Naive thymus-derived CD4-positive, alpha-beta T cell (primary cell): ENCODE measurements at regions of chr7 and their contacts with region 1.

Region 1: DNA sequence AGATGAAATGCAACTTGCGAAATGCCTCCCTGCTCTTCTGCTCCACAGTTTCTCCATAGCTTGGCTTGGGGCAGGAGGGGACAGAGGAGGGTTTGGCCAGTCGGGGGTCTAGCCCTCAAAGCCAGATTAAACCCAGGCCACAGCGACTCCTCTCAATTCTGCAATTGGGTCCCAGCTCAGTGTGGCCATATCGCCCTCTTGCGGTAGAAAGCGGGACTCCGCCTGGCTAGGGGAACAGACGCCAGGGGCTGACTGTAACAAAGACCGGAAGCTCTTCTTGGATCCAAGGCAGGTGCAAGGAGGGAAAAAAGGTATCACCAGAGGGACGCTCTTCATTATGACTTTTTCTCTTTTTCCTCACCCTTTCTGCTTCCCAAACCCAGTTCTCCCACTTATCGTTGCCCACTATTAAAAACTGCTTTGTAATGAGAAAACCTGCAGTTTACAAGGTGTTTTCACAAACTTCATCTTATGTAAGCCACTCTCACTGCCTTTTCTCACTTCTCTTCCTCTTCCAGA is 36.6 kb upstream of the TNPO3 start:
- DNase-seq: peak; percentile 69 to 91 (median 79)
- ATAC-seq: peak; percentile 94
- H3K4me3 ChIP-seq: no peak overlapping the region
- H3K4me3 Mint-ChIP-seq: peak overlapping the region in 1 of 10 donors; percentile 49
- H3K27ac ChIP-seq: no peak overlapping the region
- H3K27ac Mint-ChIP-seq: peak overlapping the region in 5 of 9 donors; percentile 34 to 86 (median 46)
- H3K4me1 ChIP-seq: peaks cover 0 to 16% of the 10 kb centered on the region in 2 donors
- H3K4me1 Mint-ChIP-seq: peaks cover 14 to 35% (median 26%) of the 10 kb centered on the region in 7 donors
- H3K27me3 ChIP-seq: no peaks in the 10 kb centered on the region
- H3K27me3 Mint-ChIP-seq: no peaks in the 10 kb centered on the region

Region 2: GRCh38 chr7:128841921-128842651 is 249.5 kb before region 1 on chr7:
- CTCF ChIA-PET with region 1: no interaction called
- POLR2A ChIA-PET with region 1: no interaction called
- intact Hi-C with region 1: loop called in 1 of 2 experiments (anchors 1 kb)
- DNase-seq: peak in 8 of 9 donors; percentile 23 to 66 (median 48)
- ATAC-seq: peak; percentile 74
- H3K4me3 ChIP-seq: no peak overlapping the region
- H3K4me3 Mint-ChIP-seq: no peak overlapping the region
- H3K27ac ChIP-seq: no peak overlapping the region
- H3K27ac Mint-ChIP-seq: peak overlapping the region in 1 of 9 donors; percentile 25
- H3K4me1 ChIP-seq: no peaks in the 10 kb centered on the region
- H3K4me1 Mint-ChIP-seq: peaks cover 0 to 2% (median 0%) of the 10 kb centered on the region in 7 donors
- H3K27me3 ChIP-seq: no peaks in the 10 kb centered on the region
- H3K27me3 Mint-ChIP-seq: no peaks in the 10 kb centered on the region

Region 3: GRCh38 chr7:128968624-128969023 is 122.9 kb before region 1 on chr7:
- CTCF ChIA-PET with region 1: no interaction called
- POLR2A ChIA-PET with region 1: no interaction called
- intact Hi-C with region 1: loop called in 1 of 2 experiments (anchors 5 kb)
- DNase-seq: no peak
- ATAC-seq: no peak
- H3K4me3 ChIP-seq: no peak overlapping the region
- H3K4me3 Mint-ChIP-seq: no peak overlapping the region
- H3K27ac ChIP-seq: no peak overlapping the region
- H3K27ac Mint-ChIP-seq: no peak overlapping the region
- H3K4me1 ChIP-seq: no peaks in the 10 kb centered on the region
- H3K4me1 Mint-ChIP-seq: peaks cover 0 to 6% (median 0%) of the 10 kb centered on the region in 7 donors
- H3K27me3 ChIP-seq: no peaks in the 10 kb centered on the region
- H3K27me3 Mint-ChIP-seq: no peaks in the 10 kb centered on the region

Region 4: DNA sequence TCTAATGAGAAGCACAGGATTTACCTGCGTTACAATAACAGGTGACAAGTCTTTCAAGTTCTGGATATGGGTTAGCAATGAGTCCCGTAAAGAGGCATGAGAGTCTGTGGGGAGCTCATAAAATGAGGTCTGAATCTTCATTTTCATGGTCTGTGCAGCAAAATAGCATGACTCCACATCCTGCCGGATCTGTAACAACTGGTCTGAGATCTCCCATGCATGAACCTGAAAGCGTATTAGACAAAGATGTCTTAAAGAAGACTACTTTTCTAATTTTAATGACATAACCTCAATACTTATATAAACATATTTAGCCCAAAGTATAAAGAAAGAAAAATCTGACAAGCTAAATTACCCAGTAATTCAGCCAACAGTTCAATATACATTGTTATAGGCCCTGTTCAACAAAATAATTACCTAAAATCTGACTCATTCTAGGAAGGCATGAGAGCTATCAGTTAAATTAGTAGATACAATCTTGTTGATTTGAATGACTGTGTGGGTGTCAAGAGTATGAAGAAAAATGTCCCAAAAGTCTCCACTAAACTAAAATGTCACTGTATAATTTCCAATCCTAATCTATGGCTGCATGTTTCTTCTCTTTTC is 73.5 kb before region 1 on chr7:
- CTCF ChIA-PET with region 1: no interaction called
- POLR2A ChIA-PET with region 1: no interaction called
- intact Hi-C with region 1: loop called (anchors 5 to 10 kb)
- DNase-seq: no peak
- ATAC-seq: no peak
- H3K4me3 ChIP-seq: no peak overlapping the region
- H3K4me3 Mint-ChIP-seq: no peak overlapping the region
- H3K27ac ChIP-seq: no peak overlapping the region
- H3K27ac Mint-ChIP-seq: peak overlapping the region in 1 of 9 donors; percentile 42
- H3K4me1 ChIP-seq: no peaks in the 10 kb centered on the region
- H3K4me1 Mint-ChIP-seq: peaks cover 7 to 44% (median 23%) of the 10 kb centered on the region in 7 donors
- H3K27me3 ChIP-seq: no peaks in the 10 kb centered on the region
- H3K27me3 Mint-ChIP-seq: no peaks in the 10 kb centered on the region

Region 5: DNA sequence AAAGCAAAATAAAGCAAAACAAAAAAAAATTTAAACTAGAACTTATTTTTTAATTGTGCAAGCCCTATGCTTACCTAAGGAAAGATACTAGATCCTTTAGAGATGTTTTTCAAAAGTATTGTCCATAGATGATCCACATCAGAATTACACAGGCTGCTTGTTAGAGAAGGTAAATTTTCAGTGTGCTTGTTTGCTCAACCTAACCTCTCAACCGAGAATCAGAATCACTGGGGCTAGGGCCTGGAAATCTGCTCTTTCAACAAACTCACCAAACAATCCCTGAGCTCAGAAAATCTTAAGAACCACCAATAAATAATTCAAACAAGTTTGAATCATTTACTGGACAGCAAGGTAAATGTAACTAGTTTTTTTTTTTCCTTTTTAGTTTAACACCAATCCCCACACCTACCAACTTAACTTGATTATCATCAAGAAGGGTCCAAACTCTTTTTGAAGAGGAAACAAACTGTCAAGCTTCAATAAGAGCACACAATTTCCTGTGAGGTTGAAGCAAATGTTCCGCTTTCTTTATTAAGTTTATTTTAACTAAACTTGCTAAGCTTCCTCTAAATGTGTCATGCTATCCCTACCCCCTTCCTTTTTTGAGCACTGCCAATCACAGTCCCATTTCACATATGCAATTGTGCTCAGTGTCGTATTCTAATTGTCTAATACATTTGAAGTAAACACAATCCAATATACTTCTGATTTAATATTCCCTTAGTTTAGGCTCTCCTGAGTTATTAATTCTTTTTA is 45.5 kb after region 1 on chr7:
- CTCF ChIA-PET with region 1: interaction called, 3 read pairs
- POLR2A ChIA-PET with region 1: no interaction called
- intact Hi-C with region 1: loop called in 1 of 2 experiments (anchors 2 kb)
- DNase-seq: peak in 7 of 9 donors; percentile 10 to 51 (median 37)
- ATAC-seq: peak; percentile 89
- H3K4me3 ChIP-seq: peak overlapping the region; percentile 9
- H3K4me3 Mint-ChIP-seq: peak overlapping the region in 9 of 10 donors; percentile 0 to 79 (median 66)
- H3K27ac ChIP-seq: peak overlapping the region; percentile 58
- H3K27ac Mint-ChIP-seq: peak overlapping the region; percentile 24 to 95 (median 88)
- H3K4me1 ChIP-seq: peaks cover 20 to 21% of the 10 kb centered on the region in 2 donors
- H3K4me1 Mint-ChIP-seq: peaks cover 19 to 50% (median 34%) of the 10 kb centered on the region in 7 donors
- H3K27me3 ChIP-seq: no peaks in the 10 kb centered on the region
- H3K27me3 Mint-ChIP-seq: peaks cover 0 to 9% (median 0%) of the 10 kb centered on the region in 5 donors

Region 6: GRCh38 chr7:129210256-129210988 is 118.9 kb after region 1 on chr7:
- CTCF ChIA-PET with region 1: interaction called, 3 read pairs
- POLR2A ChIA-PET with region 1: no interaction called
- intact Hi-C with region 1: loop called in 1 of 2 experiments (anchors 1 kb)
- DNase-seq: peak; percentile 26 to 76 (median 51)
- ATAC-seq: peak; percentile 81
- H3K4me3 ChIP-seq: no peak overlapping the region
- H3K4me3 Mint-ChIP-seq: no peak overlapping the region
- H3K27ac ChIP-seq: no peak overlapping the region
- H3K27ac Mint-ChIP-seq: peak overlapping the region in 1 of 9 donors; percentile 51
- H3K4me1 ChIP-seq: no peaks in the 10 kb centered on the region
- H3K4me1 Mint-ChIP-seq: peaks cover 0 to 2% (median 0%) of the 10 kb centered on the region in 7 donors
- H3K27me3 ChIP-seq: no peaks in the 10 kb centered on the region
- H3K27me3 Mint-ChIP-seq: peaks cover 0 to 6% (median 3%) of the 10 kb centered on the region in 5 donors

Region 7: GRCh38 chr7:129332284-129333035 is 240.9 kb after region 1 on chr7:
- CTCF ChIA-PET with region 1: no interaction called
- POLR2A ChIA-PET with region 1: no interaction called
- intact Hi-C with region 1: no loop called
- DNase-seq: no peak
- ATAC-seq: no peak
- H3K4me3 ChIP-seq: no peak overlapping the region
- H3K4me3 Mint-ChIP-seq: no peak overlapping the region
- H3K27ac ChIP-seq: no peak overlapping the region
- H3K27ac Mint-ChIP-seq: no peak overlapping the region
- H3K4me1 ChIP-seq: no peaks in the 10 kb centered on the region
- H3K4me1 Mint-ChIP-seq: peaks cover 0 to 7% (median 0%) of the 10 kb centered on the region in 7 donors
- H3K27me3 ChIP-seq: no peaks in the 10 kb centered on the region
- H3K27me3 Mint-ChIP-seq: no peaks in the 10 kb centered on the region